GM10248 (cell line): ENCODE measurements at regions of chr3 and their contacts with region 1.

Region 1: GRCh38 chr3:184543843-184544512 is 17.6 kb upstream of the EPHB3 start:
- DNase-seq: peak; percentile 83
- CTCF ChIP-seq: peak; percentile 72

Region 2: GRCh38 chr3:184362668-184363540 is 181.1 kb before region 1 on chr3:
- CTCF ChIA-PET with region 1: interaction called, 10 read pairs
- POLR2A ChIA-PET with region 1: no interaction called
- DNase-seq: peak; percentile 98
- CTCF ChIP-seq: peak; percentile 76

Region 3: GRCh38 chr3:184371570-184372018 is 172.4 kb before region 1 on chr3:
- CTCF ChIA-PET with region 1: interaction called, 90 read pairs
- POLR2A ChIA-PET with region 1: no interaction called
- DNase-seq: peak; percentile 77
- CTCF ChIP-seq: peak; percentile 82

Region 4: GRCh38 chr3:184531626-184532280 is 12.2 kb before region 1 on chr3:
- CTCF ChIA-PET with region 1: interaction called, 12 read pairs
- POLR2A ChIA-PET with region 1: no interaction called
- DNase-seq: no peak
- CTCF ChIP-seq: no peak

Region 5: GRCh38 chr3:184691397-184692231 is 147.6 kb after region 1 on chr3:
- CTCF ChIA-PET with region 1: no interaction called
- POLR2A ChIA-PET with region 1: no interaction called
- DNase-seq: no peak
- CTCF ChIP-seq: no peak